Gastrocnemius medialis (tissue), 4 donors: ENCODE measurements at regions of chr3 and their contacts with region 1.

Region 1: DNA sequence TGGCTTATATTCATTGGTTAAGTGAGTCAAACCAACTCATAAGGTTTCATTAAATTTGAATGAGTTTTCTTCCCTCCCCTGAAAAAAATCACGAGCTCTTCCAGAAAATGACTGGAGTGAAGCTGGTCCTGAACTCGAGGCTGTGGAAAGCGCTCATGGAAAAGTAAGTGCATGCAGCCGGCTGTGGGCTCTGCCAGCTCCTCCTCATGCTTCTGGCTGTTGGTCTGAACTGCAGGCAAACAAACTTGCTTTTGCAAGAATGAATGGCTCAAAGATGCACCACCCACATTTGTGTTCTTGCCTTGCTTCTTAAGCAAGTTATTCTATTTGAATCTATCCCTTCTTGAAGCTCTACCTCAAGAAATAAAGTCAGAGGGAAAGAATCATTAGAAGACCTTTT is 6.2 kb downstream of the ETV5 start:
- DNase-seq: no peak
- ATAC-seq: no peak
- H3K4me3 ChIP-seq: no peak overlapping the region
- H3K27ac ChIP-seq: peak overlapping the region; percentile 75 to 88 (median 84)
- H3K4me1 ChIP-seq: peaks cover 31 to 42% of the 10 kb centered on the region in 2 donors
- H3K27me3 ChIP-seq: no peaks in the 10 kb centered on the region
- CTCF ChIP-seq: no peak
- POLR2A ChIP-seq: no peak

Region 2: DNA sequence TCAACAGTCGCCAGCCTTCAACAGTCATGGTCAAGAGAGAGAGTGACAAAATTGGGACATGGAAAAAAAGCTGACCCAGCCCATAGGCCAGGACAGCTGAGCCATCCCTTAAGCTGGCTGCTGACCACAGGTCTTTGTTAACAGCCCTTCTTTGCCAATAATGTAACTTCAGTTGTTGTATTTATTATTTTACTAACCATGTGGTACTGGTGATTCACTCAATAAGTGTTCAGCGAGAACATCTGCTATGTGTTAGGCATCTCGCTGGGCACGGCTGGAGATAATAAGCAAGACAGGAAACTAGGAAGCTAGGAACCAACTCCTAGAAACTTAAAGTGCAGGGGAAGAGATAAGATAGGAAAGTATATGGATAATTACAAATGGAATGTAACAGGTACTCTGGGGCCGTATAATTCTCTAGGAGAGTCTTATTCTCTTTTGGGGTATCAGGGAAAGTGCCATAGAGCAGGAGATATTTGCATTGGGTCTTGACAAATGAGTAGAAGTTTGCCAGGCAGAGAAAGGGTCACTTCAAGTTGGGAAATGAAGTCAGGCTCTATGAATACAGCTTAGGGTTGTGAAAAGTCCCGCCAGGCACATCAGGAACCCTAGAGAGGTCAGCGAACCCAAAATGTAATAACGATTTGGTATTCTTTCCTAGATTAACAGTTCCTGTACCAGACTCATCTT is 80.9 kb before region 1 on chr3:
- in situ Hi-C with region 1: no loop called
- intact Hi-C with region 1: loop called (anchors 2 kb)
- DNase-seq: peak; percentile 28 to 63
- ATAC-seq: peak; percentile 87 to 96
- H3K4me3 ChIP-seq: no peak overlapping the region
- H3K27ac ChIP-seq: peak overlapping the region; percentile 50 to 65 (median 58)
- H3K4me1 ChIP-seq: peaks cover 0 to 3% of the 10 kb centered on the region in 2 donors
- H3K27me3 ChIP-seq: no peaks in the 10 kb centered on the region
- CTCF ChIP-seq: no peak
- POLR2A ChIP-seq: no peak